Left colon (tissue), 2 donors: ENCODE measurements at regions of chr20 and their contacts with region 1.

Region 1: GRCh38 chr20:16904750-16905149 is 156.6 kb downstream of the OTOR start:
- DNase-seq: no peak
- ATAC-seq: no peak

Region 2: DNA sequence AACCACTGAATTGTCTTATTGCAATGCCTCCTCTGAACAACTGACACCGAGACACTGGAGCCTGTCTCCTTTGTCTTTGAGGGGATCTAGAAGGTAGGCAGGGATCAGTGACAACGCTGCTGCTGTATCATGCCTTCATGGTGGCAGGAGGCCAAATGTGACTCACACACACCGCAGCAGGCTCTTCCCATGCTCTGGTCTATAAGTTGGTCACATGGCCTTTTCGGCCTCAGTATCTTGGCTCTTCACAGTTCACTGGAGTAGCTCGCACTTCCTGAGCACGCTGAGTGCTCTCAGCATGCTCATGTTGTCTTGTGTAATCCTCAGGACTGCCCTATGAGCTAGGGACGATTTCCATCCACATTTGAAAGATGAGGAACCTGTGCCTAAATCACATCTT is 154.7 kb after region 1 on chr20:
- intact Hi-C with region 1: loop called in 1 of 2 experiments (anchors 5 kb)
- DNase-seq: no peak
- ATAC-seq: no peak